Endothelial cell of umbilical vein (primary cell): ENCODE measurements at regions of chr5 and their contacts with region 1.

Region 1: GRCh38 chr5:15995341-15996052 is 184.1 kb downstream of the MARCHF11 start:
- DNase-seq: peak; percentile 67
- H3K4me3 ChIP-seq: no peak overlapping the region
- H3K27ac ChIP-seq: peak overlapping the region; percentile 20
- H3K4me1 ChIP-seq: peaks cover 27% of the 10 kb centered on the region
- H3K27me3 ChIP-seq: peaks cover 0 to 2% of the 10 kb centered on the region in 2 experiments
- CTCF ChIP-seq: peak; percentile 54 to 60
- POLR2A ChIP-seq: no peak

Region 2: GRCh38 chr5:15285901-15286583 is 709.5 kb before region 1 on chr5:
- CTCF ChIA-PET with region 1: interaction called, 6 read pairs
- POLR2A ChIA-PET with region 1: no interaction called
- dilution Hi-C with region 1: no loop called
- intact Hi-C with region 1: loop called (anchors 1 kb)
- DNase-seq: peak; percentile 24
- H3K4me3 ChIP-seq: no peak overlapping the region
- H3K27ac ChIP-seq: no peak overlapping the region
- H3K4me1 ChIP-seq: peaks cover 2% of the 10 kb centered on the region
- H3K27me3 ChIP-seq: no peaks in the 10 kb centered on the region
- CTCF ChIP-seq: no peak
- POLR2A ChIP-seq: no peak

Region 3: DNA sequence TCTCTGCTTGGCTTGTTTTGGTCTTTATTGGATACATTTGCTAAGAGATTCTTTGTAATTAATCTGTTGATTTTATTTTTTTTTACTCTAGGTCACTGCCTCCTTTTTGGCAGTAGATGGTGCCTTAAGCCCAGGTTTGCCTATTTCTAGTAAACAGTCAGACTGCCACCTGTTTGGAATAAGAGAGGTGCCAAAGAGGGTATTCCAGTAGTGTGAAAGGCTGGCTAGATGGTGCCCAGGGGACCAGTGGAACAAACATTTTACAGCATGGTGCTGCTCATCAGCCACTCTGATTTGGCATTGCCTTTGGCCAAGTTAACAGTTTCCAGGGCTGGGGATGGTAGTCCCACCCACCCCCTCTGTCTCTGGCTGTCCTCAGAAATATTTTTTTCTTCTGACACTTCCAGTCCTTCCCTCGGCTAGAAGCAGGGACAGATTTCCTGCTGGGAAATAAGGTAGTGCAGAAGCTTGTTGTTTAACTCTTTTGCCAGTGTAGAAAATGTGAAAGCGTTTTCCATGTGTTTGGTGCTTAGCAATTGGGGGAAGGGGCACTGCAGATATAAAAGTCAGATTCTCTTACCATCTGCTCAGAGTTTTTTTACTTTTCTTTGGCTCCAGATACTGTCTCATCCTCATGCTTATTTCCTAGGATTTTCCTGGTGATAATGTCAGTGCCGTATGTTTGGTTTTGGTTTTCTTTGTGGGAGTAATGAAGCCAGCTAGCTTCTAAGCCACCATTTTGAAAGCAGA is 532.1 kb before region 1 on chr5:
- CTCF ChIA-PET with region 1: interaction called, 36 read pairs
- POLR2A ChIA-PET with region 1: no interaction called
- dilution Hi-C with region 1: no loop called
- intact Hi-C with region 1: loop called (anchors 1 kb)
- DNase-seq: peak; percentile 52
- H3K4me3 ChIP-seq: no peak overlapping the region
- H3K27ac ChIP-seq: no peak overlapping the region
- H3K4me1 ChIP-seq: no peaks in the 10 kb centered on the region
- H3K27me3 ChIP-seq: peaks cover 17 to 36% of the 10 kb centered on the region in 2 experiments
- CTCF ChIP-seq: peak; percentile 30 to 45
- POLR2A ChIP-seq: no peak

Region 4: DNA sequence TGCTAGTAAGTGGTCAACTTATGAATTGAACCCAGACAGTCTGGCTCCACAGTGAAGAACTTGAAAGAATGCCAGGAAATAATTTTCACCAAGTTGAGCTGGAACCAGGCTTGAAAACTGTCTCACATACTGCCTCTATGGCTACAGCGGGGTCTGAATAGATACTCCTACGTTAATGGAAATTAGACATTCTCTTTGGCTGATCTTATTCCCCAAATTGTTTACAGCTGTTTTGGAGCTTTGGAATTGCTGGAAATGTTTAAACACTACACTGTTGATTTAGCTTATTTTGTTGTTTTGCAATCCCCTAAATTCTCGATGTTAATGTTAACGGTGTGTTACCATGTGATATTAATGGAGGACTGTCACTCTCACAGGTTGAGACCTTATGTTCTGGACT is 349.1 kb before region 1 on chr5:
- CTCF ChIA-PET with region 1: no interaction called
- POLR2A ChIA-PET with region 1: no interaction called
- dilution Hi-C with region 1: no loop called
- intact Hi-C with region 1: no loop called
- DNase-seq: no peak
- H3K4me3 ChIP-seq: no peak overlapping the region
- H3K27ac ChIP-seq: no peak overlapping the region
- H3K4me1 ChIP-seq: peaks cover 21% of the 10 kb centered on the region
- H3K27me3 ChIP-seq: no peaks in the 10 kb centered on the region
- CTCF ChIP-seq: no peak
- POLR2A ChIP-seq: no peak

Region 5: GRCh38 chr5:15683332-15683731 is 312.2 kb before region 1 on chr5:
- CTCF ChIA-PET with region 1: interaction called, 13 read pairs
- POLR2A ChIA-PET with region 1: no interaction called
- dilution Hi-C with region 1: no loop called
- intact Hi-C with region 1: loop called (anchors 1 kb)
- DNase-seq: peak; percentile 76
- H3K4me3 ChIP-seq: no peak overlapping the region
- H3K27ac ChIP-seq: no peak overlapping the region
- H3K4me1 ChIP-seq: peaks cover 4% of the 10 kb centered on the region
- H3K27me3 ChIP-seq: no peaks in the 10 kb centered on the region
- CTCF ChIP-seq: peak; percentile 44 to 58
- POLR2A ChIP-seq: no peak

Region 6: DNA sequence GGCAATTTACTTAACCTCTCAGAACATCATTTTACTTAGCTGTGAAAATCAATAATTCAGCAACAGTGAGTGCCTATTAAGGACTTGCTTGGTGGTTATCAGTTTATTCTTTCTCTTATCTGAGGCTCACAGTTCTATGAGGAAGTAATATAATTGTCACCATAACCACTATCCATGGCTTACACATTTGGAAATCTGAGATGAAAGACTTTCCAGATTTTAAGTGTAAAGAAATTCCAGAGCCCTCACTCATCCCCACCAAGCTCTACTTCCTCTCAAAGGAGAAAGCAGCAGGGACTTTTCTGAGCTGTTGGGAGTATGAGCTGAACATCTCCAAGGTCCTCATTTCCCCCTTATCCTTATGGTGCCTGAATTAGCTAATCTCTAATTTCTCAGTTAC is 174.0 kb before region 1 on chr5:
- CTCF ChIA-PET with region 1: interaction called, 46 read pairs
- POLR2A ChIA-PET with region 1: no interaction called
- dilution Hi-C with region 1: no loop called
- intact Hi-C with region 1: loop called (anchors 1 kb)
- DNase-seq: peak; percentile 63
- H3K4me3 ChIP-seq: no peak overlapping the region
- H3K27ac ChIP-seq: no peak overlapping the region
- H3K4me1 ChIP-seq: peaks cover 12% of the 10 kb centered on the region
- H3K27me3 ChIP-seq: no peaks in the 10 kb centered on the region
- CTCF ChIP-seq: no peak
- POLR2A ChIP-seq: no peak

Region 7: GRCh38 chr5:15938961-15939360 is 56.5 kb before region 1 on chr5:
- CTCF ChIA-PET with region 1: interaction called, 6 read pairs
- POLR2A ChIA-PET with region 1: no interaction called
- dilution Hi-C with region 1: no loop called
- intact Hi-C with region 1: loop called (anchors 2 kb)
- DNase-seq: peak; percentile 89
- H3K4me3 ChIP-seq: no peak overlapping the region
- H3K27ac ChIP-seq: peak overlapping the region; percentile 88
- H3K4me1 ChIP-seq: peaks cover 21% of the 10 kb centered on the region
- H3K27me3 ChIP-seq: no peaks in the 10 kb centered on the region
- CTCF ChIP-seq: no peak
- POLR2A ChIP-seq: no peak

Region 8: GRCh38 chr5:16065831-16066230 is 70.3 kb after region 1 on chr5:
- CTCF ChIA-PET with region 1: no interaction called
- POLR2A ChIA-PET with region 1: no interaction called
- dilution Hi-C with region 1: no loop called
- intact Hi-C with region 1: no loop called
- DNase-seq: no peak
- H3K4me3 ChIP-seq: no peak overlapping the region
- H3K27ac ChIP-seq: no peak overlapping the region
- H3K4me1 ChIP-seq: no peaks in the 10 kb centered on the region
- H3K27me3 ChIP-seq: peaks cover 0 to 4% of the 10 kb centered on the region in 2 experiments
- CTCF ChIP-seq: no peak
- POLR2A ChIP-seq: no peak